Ovary (tissue), 10 donors: ENCODE measurements at regions of chrX and their contacts with region 1.

Region 1: DNA sequence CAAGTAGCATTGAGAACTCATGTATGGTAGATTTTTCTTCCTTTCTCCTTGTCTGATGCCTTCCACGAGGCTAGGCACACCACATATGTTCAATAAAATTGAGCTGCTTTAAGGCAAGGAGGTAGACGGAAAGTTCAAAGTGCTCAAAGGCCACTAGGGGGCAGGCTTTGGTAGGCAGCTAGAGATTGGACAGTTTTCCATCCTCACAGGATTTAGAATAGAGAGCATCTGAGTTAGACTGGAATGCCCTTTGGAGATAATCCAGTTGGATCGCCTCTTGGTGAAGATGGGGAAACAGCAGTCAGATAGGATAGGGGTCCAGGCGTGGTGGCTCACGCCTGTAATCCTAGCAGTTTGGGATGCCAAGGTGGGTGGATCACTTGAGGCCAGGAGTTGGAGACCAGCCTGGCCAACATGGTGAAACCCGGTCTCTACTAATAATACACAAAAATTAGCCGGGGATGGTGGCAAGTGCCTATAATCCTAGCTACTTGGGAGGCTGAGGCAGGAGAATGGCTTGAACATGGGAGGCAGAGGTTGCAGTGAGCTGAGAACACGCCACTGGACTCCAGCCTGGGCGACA is 30.4 kb downstream of the ELF4 start:
- DNase-seq: peak; percentile 59 to 78 (median 65)
- H3K4me3 ChIP-seq: no peak overlapping the region
- H3K27ac ChIP-seq: no peak overlapping the region
- H3K4me1 ChIP-seq: peaks cover 6% of the 10 kb centered on the region
- H3K27me3 ChIP-seq: no peaks in the 10 kb centered on the region
- CTCF ChIP-seq: peak; percentile 38 to 54 (median 43)
- EP300 ChIP-seq: no peak
- POLR2A ChIP-seq: no peak

Region 2: DNA sequence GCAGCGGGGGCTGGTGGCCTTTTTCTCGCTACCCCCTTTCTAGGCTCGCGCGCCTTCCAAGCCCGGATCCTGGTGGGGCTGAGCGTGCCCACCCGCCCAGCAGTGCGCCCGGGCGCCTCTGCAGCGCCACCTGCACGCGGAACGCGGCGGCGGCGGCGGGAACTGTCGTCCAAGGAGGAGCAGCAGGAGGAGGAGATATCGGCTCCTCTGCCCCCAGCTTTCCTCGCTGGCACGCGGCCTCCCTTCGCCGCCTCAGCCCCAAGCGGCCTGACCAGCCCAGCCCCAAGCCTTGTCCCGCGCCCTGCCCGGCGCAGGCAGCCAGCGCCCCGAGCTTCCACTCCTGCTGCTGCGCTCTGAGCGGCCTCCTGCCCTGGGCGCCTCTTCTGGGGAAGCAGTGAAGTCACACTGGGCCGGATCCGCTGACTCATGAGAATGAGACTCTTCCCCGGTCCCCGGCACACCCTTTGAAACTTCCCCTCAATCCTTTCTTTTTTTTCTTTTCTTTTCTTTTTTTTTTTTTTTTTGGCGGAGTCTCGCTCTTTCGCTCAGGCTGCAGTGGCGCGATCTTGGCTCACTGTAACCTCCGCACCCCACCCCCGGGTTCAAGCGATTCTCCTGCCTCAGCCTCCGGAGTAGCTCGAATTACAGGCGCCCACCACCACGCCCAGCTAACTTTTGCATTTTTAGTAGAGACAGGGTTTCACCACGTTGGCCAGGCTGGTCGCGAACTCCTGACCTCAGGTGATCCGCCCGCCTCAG is 41.0 kb after region 1 on chrX:
- intact Hi-C with region 1: loop called in 1 of 4 experiments (anchors 2 kb)
- DNase-seq: peak; percentile 78 to 86 (median 82)
- H3K4me3 ChIP-seq: peak overlapping the region; percentile 22
- H3K27ac ChIP-seq: peak overlapping the region; percentile 83 to 84
- H3K4me1 ChIP-seq: peaks cover 6% of the 10 kb centered on the region
- H3K27me3 ChIP-seq: no peaks in the 10 kb centered on the region
- CTCF ChIP-seq: peak; percentile 60 to 83 (median 74)
- EP300 ChIP-seq: no peak
- POLR2A ChIP-seq: no peak

Region 3: GRCh38 chrX:130170752-130171445 is 91.0 kb after region 1 on chrX:
- intact Hi-C with region 1: loop called in 3 of 4 experiments (anchors 5 to 10 kb)
- DNase-seq: peak in 2 of 5 donors; percentile 34 to 41
- H3K4me3 ChIP-seq: peak overlapping the region; percentile 29
- H3K27ac ChIP-seq: no peak overlapping the region
- H3K4me1 ChIP-seq: no peaks in the 10 kb centered on the region
- H3K27me3 ChIP-seq: no peaks in the 10 kb centered on the region
- CTCF ChIP-seq: no peak
- EP300 ChIP-seq: no peak
- POLR2A ChIP-seq: no peak

Region 4: GRCh38 chrX:130190801-130191200 is 110.9 kb after region 1 on chrX:
- intact Hi-C with region 1: loop called in 3 of 4 experiments (anchors 5 kb)
- DNase-seq: no peak
- H3K4me3 ChIP-seq: no peak overlapping the region
- H3K27ac ChIP-seq: no peak overlapping the region
- H3K4me1 ChIP-seq: no peaks in the 10 kb centered on the region
- H3K27me3 ChIP-seq: no peaks in the 10 kb centered on the region
- CTCF ChIP-seq: no peak
- EP300 ChIP-seq: no peak
- POLR2A ChIP-seq: no peak

Region 5: DNA sequence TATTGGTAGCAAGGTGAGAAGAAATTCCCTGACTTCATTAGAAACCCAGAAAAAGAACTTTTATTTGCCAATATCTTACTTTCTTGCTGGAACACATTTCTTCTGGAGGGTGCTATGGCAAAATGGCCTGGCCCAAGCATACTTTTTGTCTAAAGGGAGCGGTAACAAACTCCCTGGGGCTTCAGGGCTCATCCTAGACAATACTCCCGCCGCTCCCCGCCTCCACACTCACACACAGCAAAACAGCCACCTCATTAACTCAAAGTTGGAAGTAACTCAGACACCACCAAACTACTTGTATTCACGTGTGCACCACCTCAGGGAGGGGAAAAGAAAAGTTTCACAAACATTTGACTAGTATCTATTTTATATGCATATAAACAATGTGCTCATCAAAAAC is 1133.5 kb after region 1 on chrX:
- intact Hi-C with region 1: no loop called
- DNase-seq: no peak
- H3K4me3 ChIP-seq: no peak overlapping the region
- H3K27ac ChIP-seq: no peak overlapping the region
- H3K4me1 ChIP-seq: no peaks in the 10 kb centered on the region
- H3K27me3 ChIP-seq: no peaks in the 10 kb centered on the region
- CTCF ChIP-seq: no peak
- EP300 ChIP-seq: no peak
- POLR2A ChIP-seq: no peak